ENCODE measurements at regions of chr10 and their contacts with region 1.

Region 1: DNA sequence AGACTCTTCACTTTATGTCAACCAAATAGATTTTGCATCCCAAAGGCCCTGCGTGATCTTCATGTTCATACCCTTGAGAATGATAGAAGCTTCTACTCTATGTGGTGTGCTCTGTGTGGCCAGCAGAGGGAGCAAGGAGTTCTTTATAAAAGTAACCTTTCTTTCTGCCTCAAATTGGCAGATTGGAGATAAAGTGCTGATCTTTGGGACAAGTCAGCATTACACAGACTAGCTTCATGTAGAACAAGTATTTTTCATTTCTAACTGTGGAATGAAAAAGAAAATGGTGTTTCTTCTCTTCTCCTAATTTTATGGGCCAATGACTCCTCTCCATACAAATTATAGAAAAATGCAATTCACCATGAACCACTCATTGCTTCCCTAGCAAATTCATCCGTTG is 1214.1 kb downstream of the SORCS1 start:
- DNase-seq: peak; percentile 81
- H3K4me3 ChIP-seq: no peak overlapping the region
- H3K27ac ChIP-seq: no peak overlapping the region
- H3K4me1 ChIP-seq: peaks cover 24% of the 10 kb centered on the region
- H3K27me3 ChIP-seq: no peaks in the 10 kb centered on the region
- CTCF ChIP-seq: peak; percentile 90

Region 2: GRCh38 chr10:105586451-105587098 is 363.8 kb before region 1 on chr10:
- CTCF ChIA-PET with region 1: no interaction called
- POLR2A ChIA-PET with region 1: no interaction called
- intact Hi-C with region 1: no loop called
- DNase-seq: no peak
- H3K4me3 ChIP-seq: no peak overlapping the region
- H3K27ac ChIP-seq: no peak overlapping the region
- H3K4me1 ChIP-seq: peaks cover 3% of the 10 kb centered on the region
- H3K27me3 ChIP-seq: no peaks in the 10 kb centered on the region
- CTCF ChIP-seq: no peak

Region 3: DNA sequence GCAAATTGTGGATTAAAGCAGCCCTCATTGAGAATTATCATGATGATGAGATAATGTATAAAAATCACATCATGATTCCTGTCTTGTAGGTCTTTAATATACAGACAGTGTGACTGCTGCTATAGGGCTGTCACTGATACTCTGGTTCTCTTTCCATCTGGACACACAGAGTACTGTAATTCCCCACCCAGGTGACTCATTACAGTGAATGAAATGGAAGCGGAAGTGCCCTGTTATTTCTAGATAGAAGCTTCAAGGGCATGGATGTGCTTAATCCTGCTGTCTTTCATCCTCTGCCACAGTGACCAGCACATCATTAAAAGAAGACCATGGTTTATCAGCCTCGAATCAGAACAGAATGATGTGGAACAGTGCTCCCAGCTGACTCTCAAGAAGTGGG is 75.4 kb before region 1 on chr10:
- CTCF ChIA-PET with region 1: no interaction called
- POLR2A ChIA-PET with region 1: no interaction called
- intact Hi-C with region 1: no loop called
- DNase-seq: no peak
- H3K4me3 ChIP-seq: no peak overlapping the region
- H3K27ac ChIP-seq: no peak overlapping the region
- H3K4me1 ChIP-seq: peaks cover 13% of the 10 kb centered on the region
- H3K27me3 ChIP-seq: no peaks in the 10 kb centered on the region
- CTCF ChIP-seq: no peak

Region 4: DNA sequence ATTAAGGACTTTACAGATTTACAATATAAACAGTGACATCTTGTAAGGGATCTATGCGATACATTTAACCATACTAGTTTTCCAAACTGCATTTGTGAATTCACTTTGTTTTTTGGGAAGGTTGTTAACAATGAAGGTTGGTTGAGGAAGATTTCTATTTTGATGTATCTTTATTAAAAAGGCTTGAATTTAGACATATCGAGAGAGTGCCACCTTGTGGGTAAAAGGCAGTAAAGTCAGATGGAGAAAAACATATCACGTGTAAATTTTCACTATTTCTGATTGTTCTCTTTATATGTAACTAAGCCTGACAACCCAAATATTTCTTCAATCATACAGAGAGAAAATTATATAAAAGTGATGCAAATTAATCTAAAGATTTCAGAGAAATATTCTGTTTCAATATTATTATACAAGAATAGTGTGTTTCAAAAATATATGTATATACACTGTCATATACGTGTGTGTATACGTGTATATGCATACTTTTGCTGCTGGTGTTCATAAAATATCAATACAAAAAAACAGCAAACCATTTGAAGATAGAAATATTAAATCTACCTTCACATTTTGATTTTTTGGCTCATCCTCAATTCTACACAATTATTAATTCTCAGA is 225.5 kb after region 1 on chr10:
- CTCF ChIA-PET with region 1: no interaction called
- POLR2A ChIA-PET with region 1: no interaction called
- intact Hi-C with region 1: loop called (anchors 1 kb)
- DNase-seq: peak; percentile 47
- H3K4me3 ChIP-seq: no peak overlapping the region
- H3K27ac ChIP-seq: no peak overlapping the region
- H3K4me1 ChIP-seq: no peaks in the 10 kb centered on the region
- H3K27me3 ChIP-seq: no peaks in the 10 kb centered on the region
- CTCF ChIP-seq: peak; percentile 75

Measured in A673 (cell line).